ENCODE measurements at regions of chr19 and their contacts with region 1.

Region 1: DNA sequence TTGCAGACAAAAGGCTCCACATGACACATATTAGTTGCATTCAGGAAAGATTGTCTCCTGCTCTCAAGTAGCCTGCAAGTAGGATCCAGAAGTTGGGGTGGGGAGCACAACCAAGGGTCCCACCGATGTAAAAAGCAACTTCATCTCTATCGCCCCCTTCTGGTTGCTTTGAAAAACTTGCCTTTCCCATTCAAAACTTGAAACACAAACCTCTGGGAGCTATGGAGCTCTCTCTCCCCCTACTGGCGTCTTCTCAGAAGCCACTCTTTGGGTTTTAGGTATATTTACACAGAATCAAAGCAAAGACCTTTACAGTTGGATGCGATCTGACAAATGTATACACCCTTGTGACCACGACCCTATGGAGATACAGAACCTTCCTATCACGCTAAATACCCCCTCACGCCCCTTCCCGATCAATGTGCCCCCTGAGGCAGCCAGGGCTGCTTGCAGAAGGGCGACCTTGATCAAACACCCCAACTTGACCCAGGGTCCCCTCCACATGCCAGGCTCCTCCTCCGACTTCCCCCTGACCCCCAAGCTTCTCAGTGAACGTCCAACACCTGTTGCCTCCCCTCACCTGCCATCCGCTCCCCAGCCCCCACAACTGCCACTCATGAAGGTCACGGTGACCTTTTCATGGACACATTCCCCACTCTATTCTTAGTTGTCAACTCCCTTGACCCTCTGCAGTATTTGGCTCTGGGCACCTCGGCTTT is 10.1 kb downstream of the NOSIP start:
- H3K4me3 ChIP-seq: no peak overlapping the region
- H3K27ac ChIP-seq: no peak overlapping the region
- H3K4me1 ChIP-seq: peaks cover 19% of the 10 kb centered on the region
- CTCF ChIP-seq: peak; percentile 92

Region 2: GRCh38 chr19:49473868-49474544 is 96.3 kb before region 1 on chr19 and contains the start of gene FLT3LG:
- CTCF ChIA-PET with region 1: interaction called, 10 read pairs
- POLR2A ChIA-PET with region 1: no interaction called
- H3K4me3 ChIP-seq: peak within 1 kb of the TSS; percentile 59
- H3K27ac ChIP-seq: peak within 1 kb of the TSS; percentile 5; the same call in 1 of the 2 replicates
- H3K4me1 ChIP-seq: 0 out of 2 replicates have a peak, but pooled peaks cover 2% of the 10 kb centered on the region
- CTCF ChIP-seq: peak; percentile 97

Region 3: GRCh38 chr19:49502866-49503581 is 67.3 kb before region 1 on chr19:
- CTCF ChIA-PET with region 1: interaction called, 168 read pairs
- POLR2A ChIA-PET with region 1: interaction called, 3 read pairs
- H3K4me3 ChIP-seq: no peak overlapping the region
- H3K27ac ChIP-seq: no peak overlapping the region; the same call in 1 of the 2 replicates
- H3K4me1 ChIP-seq: no peaks in the 10 kb centered on the region; the same call in 1 of the 2 replicates
- CTCF ChIP-seq: peak; percentile 89

Region 4: DNA sequence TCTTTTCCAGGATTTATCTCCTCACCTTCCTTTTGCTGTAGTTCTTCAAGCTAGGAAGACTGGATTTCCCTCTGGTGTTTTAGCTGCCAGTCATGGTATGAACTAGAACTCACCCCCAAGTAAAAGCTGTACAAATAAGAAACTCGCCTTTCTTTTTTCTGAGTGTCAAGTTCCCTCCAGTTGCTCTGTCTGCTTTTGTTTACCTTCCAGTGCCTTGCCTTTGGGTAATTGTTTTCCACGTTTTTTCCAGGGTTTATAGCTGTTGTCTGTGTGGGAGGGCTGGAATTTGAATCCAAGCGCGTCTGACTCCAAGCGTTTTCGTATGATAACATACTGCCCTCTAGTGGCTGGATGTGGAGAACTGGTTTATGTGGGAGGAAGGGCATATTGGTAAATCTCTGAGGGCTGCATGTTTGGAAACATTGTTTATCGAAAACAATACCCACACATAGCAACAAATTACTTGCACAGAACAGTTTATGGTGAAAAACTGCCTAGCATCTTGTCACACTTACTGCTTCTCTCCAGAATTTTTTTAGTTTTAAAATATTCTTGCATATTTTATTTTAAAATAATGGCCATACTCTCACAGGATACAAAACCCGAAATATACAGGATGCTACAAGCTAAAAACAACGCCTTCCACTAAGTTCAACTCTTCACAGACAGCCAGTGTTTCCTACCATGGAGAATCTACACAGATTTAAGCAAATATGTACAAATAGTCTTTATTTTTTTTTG is 23.3 kb before region 1 on chr19:
- CTCF ChIA-PET with region 1: interaction called, 90 read pairs
- POLR2A ChIA-PET with region 1: interaction called, 8 read pairs
- H3K4me3 ChIP-seq: no peak overlapping the region
- H3K27ac ChIP-seq: peak overlapping the region; percentile 54
- H3K4me1 ChIP-seq: peaks cover 9% of the 10 kb centered on the region
- CTCF ChIP-seq: peak; percentile 68

Region 5: DNA sequence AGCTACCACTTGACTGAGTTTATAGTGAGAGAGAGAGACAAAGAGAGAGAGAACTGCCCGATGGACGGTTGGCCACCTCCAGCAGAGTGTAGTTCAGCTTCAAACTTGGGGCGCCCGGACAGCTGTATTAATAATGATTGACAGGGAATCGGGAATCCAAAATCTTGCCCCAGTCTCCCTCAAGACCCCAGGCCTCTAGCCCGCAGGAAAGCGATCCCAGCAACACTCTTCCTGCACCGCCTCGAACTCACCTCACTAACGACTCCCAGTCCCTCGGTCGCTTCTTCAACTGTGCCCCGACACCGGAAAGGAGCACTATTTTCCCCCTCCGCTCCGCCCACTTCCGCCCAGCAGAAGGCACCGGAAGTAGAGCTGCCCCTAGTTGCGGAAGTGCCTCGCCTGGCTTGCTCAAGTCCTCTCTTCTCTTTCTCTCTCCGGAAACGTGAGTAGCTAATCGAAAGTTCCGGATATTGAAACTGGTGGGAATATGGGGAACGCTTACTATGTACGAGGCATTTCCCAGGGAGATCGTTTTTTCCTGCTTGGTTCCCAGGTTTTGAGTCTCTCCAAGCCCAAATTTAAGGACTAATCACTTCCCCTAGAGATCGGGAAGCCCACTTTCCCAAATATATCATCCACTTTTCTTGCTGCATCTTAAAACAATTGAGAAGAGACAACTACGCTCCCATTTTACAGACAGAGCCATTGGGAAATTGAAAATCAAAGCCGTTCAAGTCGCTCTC is 10.1 kb after region 1 on chr19 and contains the start of gene NOSIP:
- CTCF ChIA-PET with region 1: interaction called, 52 read pairs
- POLR2A ChIA-PET with region 1: interaction called, 45 read pairs
- H3K4me3 ChIP-seq: peak within 1 kb of the TSS; percentile 67
- H3K27ac ChIP-seq: peak within 1 kb of the TSS; percentile 58
- H3K4me1 ChIP-seq: peaks cover 9% of the 10 kb centered on the region
- CTCF ChIP-seq: no peak

Measured in HEK293 (cell line).